Activated CD8-positive, alpha-beta T cell treated with anti-CD3 and anti-CD28 coated beads for 36 hours (primary cell): ENCODE measurements at regions of chr10 and their contacts with region 1.

Region 1: GRCh38 chr10:73096449-73097304 is at the start of gene P4HA1:
- DNase-seq: peak; percentile 99
- ATAC-seq: peak; percentile 93
- H3K4me3 Mint-ChIP-seq: peak within 1 kb of the TSS; percentile 95
- H3K27ac Mint-ChIP-seq: peak within 1 kb of the TSS; percentile 98
- H3K4me1 Mint-ChIP-seq: peaks cover 31% of the 10 kb centered on the region
- H3K27me3 Mint-ChIP-seq: no peaks in the 10 kb centered on the region
- CTCF ChIP-seq: peak; percentile 62
- total RNA-seq, gene P4HA1: 72.2 to 72.3 TPM

Region 2: GRCh38 chr10:73054286-73054685 is 42.4 kb before region 1 on chr10:
- CTCF ChIA-PET with region 1: no interaction called
- POLR2A ChIA-PET with region 1: no interaction called
- intact Hi-C with region 1: no loop called
- DNase-seq: no peak
- ATAC-seq: no peak
- H3K4me3 Mint-ChIP-seq: no peak overlapping the region
- H3K27ac Mint-ChIP-seq: no peak overlapping the region
- H3K4me1 Mint-ChIP-seq: no peaks in the 10 kb centered on the region
- H3K27me3 Mint-ChIP-seq: no peaks in the 10 kb centered on the region
- CTCF ChIP-seq: no peak

Region 3: GRCh38 chr10:73110345-73110849 is 13.7 kb after region 1 on chr10 and contains the start of gene NUDT13:
- CTCF ChIA-PET with region 1: interaction called, 13 read pairs
- POLR2A ChIA-PET with region 1: interaction called, 14 read pairs
- intact Hi-C with region 1: no loop called
- DNase-seq: peak; percentile 55
- ATAC-seq: peak; percentile 86
- H3K4me3 Mint-ChIP-seq: peak within 1 kb of the TSS; percentile 89
- H3K27ac Mint-ChIP-seq: peak within 1 kb of the TSS; percentile 91
- H3K4me1 Mint-ChIP-seq: peaks cover 10% of the 10 kb centered on the region
- H3K27me3 Mint-ChIP-seq: no peaks in the 10 kb centered on the region
- CTCF ChIP-seq: no peak
- total RNA-seq, gene NUDT13: 2.3 to 2.4 TPM

Region 4: GRCh38 chr10:73167783-73168464 is 71.2 kb after region 1 on chr10 and contains the starts of genes ECD and FAM149B1:
- CTCF ChIA-PET with region 1: interaction called, 10 read pairs
- POLR2A ChIA-PET with region 1: interaction called, 13 read pairs
- intact Hi-C with region 1: no loop called
- DNase-seq: peak; percentile 97
- ATAC-seq: peak; percentile 97
- H3K4me3 Mint-ChIP-seq: peak within 1 kb of the TSS; percentile 98
- H3K27ac Mint-ChIP-seq: peak within 1 kb of the TSS; percentile 100
- H3K4me1 Mint-ChIP-seq: peaks cover 35% of the 10 kb centered on the region
- H3K27me3 Mint-ChIP-seq: no peaks in the 10 kb centered on the region
- CTCF ChIP-seq: peak; percentile 43
- total RNA-seq, gene ECD: 31.8 to 33.9 TPM
- total RNA-seq, gene FAM149B1: 13.0 to 13.3 TPM